Right ventricle myocardium superior (tissue), 1 donor: ENCODE measurements at regions of chrX and their contacts with region 1.

Region 1: DNA sequence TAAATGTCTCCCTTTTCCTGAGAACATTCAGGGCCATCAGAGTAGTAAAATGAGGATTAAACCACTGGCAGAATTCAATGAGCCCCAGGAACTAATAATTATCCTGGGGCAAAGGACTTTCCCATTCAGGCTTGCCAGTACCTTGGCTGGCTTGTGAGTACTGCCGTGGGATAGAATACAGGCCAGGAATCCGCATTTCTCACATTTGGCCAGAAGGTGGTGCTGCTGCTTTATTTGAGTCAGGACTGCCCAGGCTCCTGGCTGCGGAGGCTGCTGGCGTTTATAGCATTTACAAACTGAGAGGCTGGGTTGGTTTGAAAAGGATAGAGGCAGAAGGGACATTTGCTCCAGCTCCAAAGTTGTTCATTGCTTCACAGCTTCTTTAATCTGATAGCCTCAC is 91.4 kb downstream of the RTL9 start:
- DNase-seq: peak; percentile 74
- ATAC-seq: peak; percentile 90

Region 2: DNA sequence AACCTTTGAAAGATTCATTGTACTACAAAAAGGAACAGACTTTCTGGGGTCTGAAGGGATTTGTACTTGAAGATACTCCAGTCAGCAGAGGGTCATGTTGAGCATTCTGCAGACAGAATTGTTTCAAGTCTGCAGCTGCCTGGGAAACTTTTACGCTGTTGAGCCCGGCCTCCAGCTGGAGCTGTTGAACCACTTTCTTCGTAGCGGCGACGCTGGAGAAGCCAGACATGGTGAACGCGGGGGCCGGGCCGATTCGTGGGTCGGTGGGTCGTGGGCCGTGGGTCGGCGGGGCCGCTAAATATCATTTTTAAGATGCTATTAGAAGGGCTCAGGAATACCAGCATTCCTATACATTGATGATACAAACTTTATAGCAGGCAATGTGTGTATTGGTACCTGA is 103.4 kb before region 1 on chrX:
- intact Hi-C with region 1: no loop called
- DNase-seq: peak; percentile 31
- ATAC-seq: no peak

Region 3: DNA sequence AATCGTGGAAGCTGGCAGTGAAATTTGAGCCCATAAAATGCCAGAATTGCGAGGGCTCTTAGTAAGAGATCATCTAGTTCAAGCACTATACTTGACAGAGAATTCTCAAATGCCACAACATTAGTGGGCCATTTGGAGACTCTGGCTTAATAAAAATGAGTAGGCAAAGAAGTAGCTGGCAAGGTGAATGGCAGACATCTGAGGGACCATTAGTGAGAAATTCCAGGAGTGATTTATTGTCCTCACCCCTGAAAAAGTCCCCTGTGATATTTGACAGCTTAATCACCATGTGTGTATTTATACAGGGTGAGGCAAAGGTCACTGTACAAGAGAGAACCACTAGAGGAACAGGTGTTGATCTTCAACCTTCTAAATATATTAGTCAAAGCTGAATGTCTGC is 138.1 kb after region 1 on chrX:
- intact Hi-C with region 1: no loop called
- DNase-seq: no peak
- ATAC-seq: no peak

Region 4: GRCh38 chrX:110847334-110847733 is 397.3 kb after region 1 on chrX:
- intact Hi-C with region 1: loop called (anchors 5 kb)
- DNase-seq: no peak
- ATAC-seq: peak; percentile 60

Region 5: GRCh38 chrX:111445486-111445885 is 995.4 kb after region 1 on chrX:
- intact Hi-C with region 1: loop called (anchors 10 kb)
- DNase-seq: no peak
- ATAC-seq: no peak